Heart right ventricle (tissue), 16 donors: ENCODE measurements at regions of chr15 and their contacts with region 1.

Region 1: DNA sequence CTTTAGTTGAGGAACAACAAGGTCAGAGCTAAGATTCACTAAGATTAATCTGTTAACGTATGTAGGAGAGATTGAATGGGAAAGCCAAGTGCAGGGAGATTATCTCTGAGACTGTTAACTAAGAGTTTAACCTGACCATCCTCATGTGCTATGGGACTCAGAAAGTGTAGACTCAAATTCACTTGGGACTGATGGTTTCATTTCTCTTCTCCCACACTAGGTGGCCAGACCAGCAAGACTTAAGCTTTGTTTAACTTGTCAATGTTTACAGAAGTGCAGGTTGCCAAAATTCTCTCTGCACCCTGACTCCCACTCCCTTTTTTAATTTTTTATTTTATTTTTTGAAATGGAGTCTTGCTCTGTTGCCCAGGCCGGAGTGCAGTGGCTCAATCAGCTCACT is 6.3 kb upstream of the HEXA start:
- DNase-seq: no peak
- ATAC-seq: no peak
- H3K4me3 ChIP-seq: no peak overlapping the region
- H3K27ac ChIP-seq: no peak overlapping the region
- H3K4me1 ChIP-seq: peaks cover 0 to 18% (median 6%) of the 10 kb centered on the region in 9 donors
- H3K27me3 ChIP-seq: peaks cover 0 to 35% (median 7%) of the 10 kb centered on the region in 7 donors
- CTCF ChIP-seq: peak in 2 of 9 donors; percentile 10 to 21

Region 2: DNA sequence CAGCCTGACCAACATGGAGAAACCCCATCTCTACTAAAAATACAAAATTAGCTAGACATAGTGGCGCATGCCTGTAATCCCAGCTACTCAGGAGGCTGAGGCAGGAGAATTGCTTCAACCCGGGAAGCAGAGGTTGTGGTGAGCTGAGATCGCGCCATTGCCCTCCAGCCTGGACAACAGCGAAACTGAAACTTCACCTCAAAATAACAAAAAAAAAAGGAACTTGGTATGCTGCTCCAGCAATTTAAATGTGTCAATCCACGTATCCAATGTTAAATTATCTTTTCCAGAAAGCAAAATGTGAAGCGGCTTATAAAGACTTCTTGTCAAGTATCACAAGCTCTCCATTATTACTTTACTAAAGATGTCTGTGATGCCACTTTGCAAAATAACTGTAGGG is 82.1 kb after region 1 on chr15:
- intact Hi-C with region 1: loop called in 1 of 10 experiments (anchors 10 kb)
- DNase-seq: no peak
- ATAC-seq: no peak
- H3K4me3 ChIP-seq: peak overlapping the region in 1 of 10 donors; percentile 26
- H3K27ac ChIP-seq: peak overlapping the region in 1 of 10 donors; percentile 61
- H3K4me1 ChIP-seq: peaks cover 0 to 21% (median 0%) of the 10 kb centered on the region in 9 donors
- H3K27me3 ChIP-seq: no peaks in the 10 kb centered on the region
- CTCF ChIP-seq: no peak